A673 (cell line): ENCODE measurements at regions of chr9 and their contacts with region 1.

Region 1: DNA sequence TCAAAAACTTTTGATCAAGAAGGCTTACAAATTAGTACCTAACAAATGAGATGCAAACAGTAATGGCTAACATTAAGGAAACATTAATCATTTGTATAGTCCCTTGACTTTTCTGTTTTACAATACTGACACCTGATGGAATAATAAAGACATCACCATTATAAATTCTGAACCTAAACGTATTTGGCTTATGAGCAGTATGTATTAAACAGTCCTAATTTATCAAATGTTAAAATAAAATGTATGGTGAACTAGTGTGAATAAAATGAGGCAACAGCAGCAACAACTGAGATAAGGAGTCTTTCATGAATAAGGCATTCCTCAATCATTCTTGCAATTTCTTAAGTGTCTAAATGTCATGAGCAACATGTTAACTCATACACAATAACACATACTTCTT is 6.0 kb downstream of the PUM3 start:
- DNase-seq: peak; percentile 10
- H3K4me3 ChIP-seq: no peak overlapping the region
- H3K27ac ChIP-seq: no peak overlapping the region
- H3K4me1 ChIP-seq: peaks cover 15% of the 10 kb centered on the region
- H3K27me3 ChIP-seq: no peaks in the 10 kb centered on the region
- CTCF ChIP-seq: peak; percentile 54; the same call in 1 of the 2 replicates

Region 2: DNA sequence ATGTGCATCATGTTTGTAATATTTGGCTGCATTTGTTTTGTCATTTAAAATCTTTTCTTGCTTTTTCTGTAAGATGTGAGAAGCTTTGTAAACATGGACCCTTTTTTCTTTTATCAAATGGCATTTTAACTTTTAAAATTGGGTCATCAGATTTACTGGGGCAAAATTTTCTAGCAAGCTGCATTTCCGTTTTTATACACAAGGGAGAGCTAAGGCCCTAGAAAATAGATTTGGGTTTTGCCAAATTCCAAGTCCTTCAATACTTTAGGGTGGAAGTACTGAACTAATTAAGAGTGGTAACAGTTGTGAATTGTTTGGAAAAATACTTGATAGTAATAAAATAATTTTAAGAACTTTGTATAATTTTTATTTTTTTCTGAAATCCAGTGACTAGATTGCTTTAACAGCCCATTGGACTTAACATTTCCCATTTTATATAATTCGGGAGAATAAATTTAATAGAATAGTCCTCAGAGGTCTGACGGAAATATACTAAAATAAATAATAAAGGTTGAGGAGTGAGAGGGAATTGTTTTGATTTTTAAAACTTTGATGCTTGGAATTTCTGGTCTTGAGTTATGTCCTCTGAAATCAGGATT is 705.3 kb before region 1 on chr9:
- CTCF ChIA-PET with region 1: no interaction called
- POLR2A ChIA-PET with region 1: no interaction called
- intact Hi-C with region 1: loop called (anchors 10 kb)
- DNase-seq: peak; percentile 68
- H3K4me3 ChIP-seq: no peak overlapping the region
- H3K27ac ChIP-seq: no peak overlapping the region
- H3K4me1 ChIP-seq: no peaks in the 10 kb centered on the region
- H3K27me3 ChIP-seq: no peaks in the 10 kb centered on the region
- CTCF ChIP-seq: peak; percentile 80

Region 3: DNA sequence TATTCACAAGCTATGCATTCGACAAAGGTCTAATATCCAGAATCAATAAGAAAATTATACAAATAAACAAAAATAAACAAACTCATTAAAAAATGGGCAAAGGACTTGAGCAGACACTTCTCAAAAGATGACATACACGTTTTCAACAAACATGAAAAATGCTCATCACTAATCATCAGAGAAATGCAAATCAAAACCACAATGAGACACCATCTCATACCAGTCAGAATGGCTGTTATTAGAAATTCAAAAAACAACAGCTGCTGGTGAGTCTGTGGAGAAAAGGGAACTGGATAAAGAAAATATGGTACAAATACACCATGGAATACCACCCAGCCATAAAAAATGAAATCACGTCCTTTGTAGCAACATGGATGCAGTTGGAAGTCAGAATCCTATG is 51.1 kb after region 1 on chr9:
- CTCF ChIA-PET with region 1: no interaction called
- POLR2A ChIA-PET with region 1: no interaction called
- intact Hi-C with region 1: no loop called
- DNase-seq: no peak
- H3K4me3 ChIP-seq: no peak overlapping the region
- H3K27ac ChIP-seq: no peak overlapping the region
- H3K4me1 ChIP-seq: no peaks in the 10 kb centered on the region
- H3K27me3 ChIP-seq: peaks cover 7% of the 10 kb centered on the region
- CTCF ChIP-seq: no peak

Region 4: GRCh38 chr9:2919347-2919746 is 81.4 kb after region 1 on chr9:
- CTCF ChIA-PET with region 1: no interaction called
- POLR2A ChIA-PET with region 1: no interaction called
- intact Hi-C with region 1: no loop called
- DNase-seq: no peak
- H3K4me3 ChIP-seq: no peak overlapping the region
- H3K27ac ChIP-seq: no peak overlapping the region
- H3K4me1 ChIP-seq: no peaks in the 10 kb centered on the region
- H3K27me3 ChIP-seq: peaks cover 3% of the 10 kb centered on the region
- CTCF ChIP-seq: no peak

Region 5: GRCh38 chr9:3321186-3321585 is 483.3 kb after region 1 on chr9:
- CTCF ChIA-PET with region 1: no interaction called
- POLR2A ChIA-PET with region 1: no interaction called
- intact Hi-C with region 1: no loop called
- DNase-seq: no peak
- H3K4me3 ChIP-seq: no peak overlapping the region
- H3K27ac ChIP-seq: no peak overlapping the region
- H3K4me1 ChIP-seq: no peaks in the 10 kb centered on the region
- H3K27me3 ChIP-seq: no peaks in the 10 kb centered on the region
- CTCF ChIP-seq: no peak